ENCODE measurements at regions of chr20 and their contacts with region 1.

Region 1: GRCh38 chr20:1509237-1509636 is 18.0 kb upstream of the SIRPB2 start:
- DNase-seq: no peak
- ATAC-seq: peak; percentile 98
- H3K4me3 ChIP-seq: no peak overlapping the region
- H3K27ac ChIP-seq: no peak overlapping the region
- H3K4me1 ChIP-seq: 0 out of 2 replicates have a peak, but pooled peaks cover 3% of the 10 kb centered on the region
- H3K27me3 ChIP-seq: peaks cover 0 to 8% of the 10 kb centered on the region in 2 experiments; a peak in 1 of 4 replicates
- CTCF ChIP-seq: peak; percentile 59 to 68 (median 60)
- EP300 ChIP-seq: no peak
- POLR2A ChIP-seq: no peak
- RAD21 ChIP-seq: peak; percentile 87

Region 2: GRCh38 chr20:1524004-1524403 is 14.8 kb after region 1 on chr20:
- CTCF ChIA-PET with region 1: interaction called, 17 read pairs
- POLR2A ChIA-PET with region 1: no interaction called
- RAD21 ChIA-PET with region 1: interaction called, 6 read pairs
- SMC1A ChIA-PET with region 1: interaction called, 13 read pairs
- in situ Hi-C with region 1: no loop called
- intact Hi-C with region 1: no loop called
- DNase-seq: no peak
- ATAC-seq: peak; percentile 83
- H3K4me3 ChIP-seq: no peak overlapping the region
- H3K27ac ChIP-seq: no peak overlapping the region
- H3K4me1 ChIP-seq: peaks cover 5% of the 10 kb centered on the region; the same call in 1 of the 2 replicates
- H3K27me3 ChIP-seq: no peaks in the 10 kb centered on the region; a peak in 1 of 4 replicates
- CTCF ChIP-seq: no peak
- EP300 ChIP-seq: peak; percentile 59 to 65; a peak in 2 of 4 replicates
- POLR2A ChIP-seq: no peak
- RAD21 ChIP-seq: no peak

Region 3: GRCh38 chr20:1555952-1556351 is 46.7 kb after region 1 on chr20:
- CTCF ChIA-PET with region 1: interaction called, 10 read pairs
- POLR2A ChIA-PET with region 1: no interaction called
- RAD21 ChIA-PET with region 1: no interaction called
- SMC1A ChIA-PET with region 1: interaction called, 7 read pairs
- in situ Hi-C with region 1: no loop called
- intact Hi-C with region 1: no loop called
- DNase-seq: no peak
- ATAC-seq: no peak
- H3K4me3 ChIP-seq: no peak overlapping the region
- H3K27ac ChIP-seq: no peak overlapping the region
- H3K4me1 ChIP-seq: no peaks in the 10 kb centered on the region
- H3K27me3 ChIP-seq: peaks cover 0 to 2% of the 10 kb centered on the region in 2 experiments; a peak in 1 of 4 replicates
- CTCF ChIP-seq: no peak
- EP300 ChIP-seq: no peak
- POLR2A ChIP-seq: no peak
- RAD21 ChIP-seq: 0 out of 2 replicates have a peak, but pooled peaks have one; percentile 16

Region 4: GRCh38 chr20:1636621-1637020 is 127.4 kb after region 1 on chr20:
- CTCF ChIA-PET with region 1: interaction called, 7 read pairs
- POLR2A ChIA-PET with region 1: no interaction called
- RAD21 ChIA-PET with region 1: interaction called, 10 read pairs
- SMC1A ChIA-PET with region 1: interaction called, 8 read pairs
- in situ Hi-C with region 1: no loop called
- intact Hi-C with region 1: loop called (anchors 5 kb)
- DNase-seq: no peak
- ATAC-seq: peak; percentile 39; the same call in 2 of the 3 replicates
- H3K4me3 ChIP-seq: no peak overlapping the region
- H3K27ac ChIP-seq: no peak overlapping the region
- H3K4me1 ChIP-seq: peaks cover 7% of the 10 kb centered on the region
- H3K27me3 ChIP-seq: no peaks in the 10 kb centered on the region; a peak in 1 of 4 replicates
- CTCF ChIP-seq: peak; percentile 5 to 15 (median 8); a peak in 2 of 6 replicates
- EP300 ChIP-seq: no peak
- POLR2A ChIP-seq: no peak
- RAD21 ChIP-seq: peak; percentile 33; the same call in 1 of the 2 replicates

Region 5: GRCh38 chr20:1741309-1742048 is 232.2 kb after region 1 on chr20:
- CTCF ChIA-PET with region 1: interaction called, 12 read pairs
- POLR2A ChIA-PET with region 1: no interaction called
- RAD21 ChIA-PET with region 1: interaction called, 7 read pairs
- SMC1A ChIA-PET with region 1: interaction called, 24 read pairs
- in situ Hi-C with region 1: no loop called
- intact Hi-C with region 1: no loop called
- DNase-seq: no peak
- ATAC-seq: peak; percentile 93
- H3K4me3 ChIP-seq: no peak overlapping the region
- H3K27ac ChIP-seq: no peak overlapping the region
- H3K4me1 ChIP-seq: no peaks in the 10 kb centered on the region
- H3K27me3 ChIP-seq: no peaks in the 10 kb centered on the region; a peak in 1 of 4 replicates
- CTCF ChIP-seq: no peak
- EP300 ChIP-seq: no peak
- POLR2A ChIP-seq: no peak
- RAD21 ChIP-seq: no peak

Measured in GM12878 (cell line).